AG04449 (cell line): ENCODE measurements at regions of chr1 and their contacts with region 1.

Region 1: DNA sequence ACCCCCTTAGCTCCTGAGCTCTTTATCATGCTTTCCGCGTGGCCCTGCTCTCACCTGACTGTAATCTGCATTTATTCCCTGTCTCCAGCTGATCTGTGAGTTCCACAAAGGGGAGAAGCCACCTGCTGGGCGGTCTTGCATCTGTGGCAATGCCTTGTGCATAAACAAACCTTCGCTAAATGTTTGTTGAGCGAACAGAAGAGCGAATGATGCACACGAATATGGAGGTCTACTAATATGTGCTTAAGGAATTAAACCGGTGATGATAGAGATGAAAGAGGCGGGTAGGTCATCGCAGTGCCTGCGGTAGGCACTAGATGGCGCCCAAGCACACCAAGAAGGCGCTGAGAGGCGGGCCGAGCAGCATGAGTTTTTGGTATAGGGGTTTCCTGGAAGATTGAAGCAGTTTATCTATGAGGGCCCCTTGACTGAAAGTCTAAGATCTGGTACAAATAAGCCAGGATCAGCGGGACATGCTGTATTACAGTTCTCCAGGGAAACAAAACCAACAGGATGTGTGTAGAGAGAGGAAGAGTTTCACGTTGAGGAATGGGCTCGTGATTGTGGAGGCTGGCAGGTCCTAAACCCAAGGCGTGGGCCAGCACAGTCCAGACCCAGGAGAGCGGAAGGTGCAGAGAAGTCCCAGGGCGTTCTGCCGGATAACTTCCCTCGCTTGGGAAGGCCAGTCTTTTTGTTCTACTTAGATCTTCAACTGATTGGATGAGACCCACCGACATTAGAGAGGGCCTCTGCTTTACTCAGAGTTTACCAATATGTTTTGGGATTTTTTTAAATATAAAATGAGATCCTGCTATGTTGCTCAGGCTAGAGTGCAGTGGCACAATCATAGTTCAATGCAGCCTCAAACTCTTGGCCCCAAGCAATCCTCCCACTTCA is 34.7 kb downstream of the TOMM20 start:
- DNase-seq: no peak
- H3K4me3 ChIP-seq: no peak overlapping the region
- CTCF ChIP-seq: peak; percentile 87

Region 2: DNA sequence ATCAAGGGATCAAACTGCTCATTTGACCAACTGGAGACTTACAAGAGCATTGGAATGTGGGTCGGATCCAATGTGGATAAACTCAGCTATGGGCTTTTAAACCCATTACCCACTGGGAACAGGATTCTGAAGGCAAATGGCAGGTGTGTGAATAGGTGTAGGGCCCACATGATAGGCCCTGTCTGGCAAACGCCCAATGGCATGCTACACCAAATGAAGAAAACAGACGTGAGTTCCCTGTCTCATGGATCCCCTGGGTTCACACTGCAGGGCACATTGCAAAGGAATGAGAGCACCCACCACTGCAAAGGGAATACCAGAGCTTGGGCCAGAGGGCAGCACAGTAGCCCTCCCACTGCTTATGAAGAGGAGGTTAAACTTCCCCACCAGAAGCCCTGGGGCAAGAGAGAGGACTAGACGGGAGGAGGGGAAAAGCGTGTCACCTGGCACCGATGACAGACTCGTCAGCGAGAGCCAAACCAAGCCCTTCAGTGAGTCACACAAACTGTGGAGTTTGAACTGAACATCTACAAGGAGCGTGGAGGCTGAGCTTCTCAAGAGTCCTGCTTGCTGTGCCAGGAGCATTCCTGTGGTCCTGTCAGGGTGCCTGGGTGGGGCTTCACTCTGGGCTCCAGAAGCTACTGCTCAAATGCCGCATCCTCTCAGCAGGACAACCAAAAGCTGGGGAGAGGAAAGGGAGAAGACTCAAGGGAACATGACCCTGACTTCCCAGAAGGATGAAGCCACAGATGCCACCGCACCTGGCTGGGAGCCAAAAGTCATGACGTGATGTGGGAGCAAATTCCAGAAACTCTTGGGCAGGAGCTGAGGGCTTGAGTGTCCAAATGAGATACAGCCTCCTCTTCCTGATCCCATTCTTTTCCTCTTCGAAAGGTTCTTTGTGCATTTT is 26.4 kb before region 1 on chr1:
- CTCF ChIA-PET with region 1: no interaction called
- POLR2A ChIA-PET with region 1: no interaction called
- DNase-seq: peak; percentile 97
- H3K4me3 ChIP-seq: no peak overlapping the region
- CTCF ChIP-seq: no peak

Region 3: GRCh38 chr1:235105051-235106043 is 11.4 kb after region 1 on chr1:
- CTCF ChIA-PET with region 1: interaction called, 65 read pairs
- POLR2A ChIA-PET with region 1: no interaction called
- DNase-seq: no peak
- H3K4me3 ChIP-seq: no peak overlapping the region
- CTCF ChIP-seq: no peak